ENCODE measurements at regions of chr4 and their contacts with region 1.

Region 1: DNA sequence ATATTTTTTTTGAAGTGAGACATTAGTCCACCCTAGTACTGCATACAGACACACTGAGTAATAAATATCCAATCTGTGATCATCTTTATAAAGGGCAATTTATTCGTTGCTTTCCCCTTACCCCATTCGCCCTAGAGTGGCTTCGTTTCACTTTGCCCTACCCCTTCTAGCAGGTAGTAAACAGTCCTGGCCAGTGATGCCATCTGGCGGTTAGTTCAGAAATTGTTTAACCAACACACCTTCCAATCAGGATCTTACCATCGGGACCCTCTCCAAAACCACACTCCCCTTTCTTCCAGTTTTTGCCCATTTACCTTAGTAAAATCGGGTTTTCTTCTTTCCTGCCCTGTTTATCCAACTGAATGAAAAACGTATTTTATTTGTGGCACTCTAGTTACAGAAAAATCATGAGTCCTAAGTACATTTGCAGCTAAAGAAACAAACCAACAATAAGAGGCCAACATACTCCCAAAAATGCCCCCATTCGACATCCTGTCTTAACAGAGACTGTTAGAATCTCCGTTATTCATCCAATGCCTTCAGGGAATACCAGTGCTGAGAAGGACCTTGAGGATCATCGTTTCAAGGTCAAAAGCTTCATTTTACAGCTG is 2.2 kb downstream of the PPA2 start:
- DNase-seq: peak; percentile 87
- H3K4me3 Mint-ChIP-seq: peak overlapping the region; percentile 98
- H3K27ac Mint-ChIP-seq: peak overlapping the region; percentile 99
- H3K4me1 Mint-ChIP-seq: peaks cover 18% of the 10 kb centered on the region
- H3K27me3 Mint-ChIP-seq: no peaks in the 10 kb centered on the region
- CTCF ChIP-seq: peak; percentile 56

Region 2: DNA sequence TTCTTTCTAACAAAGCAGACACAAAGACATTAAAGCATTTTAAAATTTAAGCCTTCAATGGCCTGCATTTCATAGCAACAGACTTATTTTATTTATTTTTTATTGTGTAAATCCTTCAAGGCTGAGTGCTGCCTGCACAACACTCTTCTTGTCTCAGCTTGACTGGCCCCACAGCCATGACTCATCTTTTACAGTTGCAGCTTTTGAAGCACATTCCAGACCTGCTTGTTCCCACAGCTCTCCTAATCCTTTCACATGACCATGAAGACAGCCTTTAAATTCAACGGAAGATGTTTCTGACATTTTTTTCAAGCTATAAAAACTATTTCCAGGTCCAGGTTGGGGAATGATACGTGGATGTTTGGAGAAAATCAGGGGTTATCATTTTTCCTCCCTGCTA is 1475.0 kb before region 1 on chr4:
- CTCF ChIA-PET with region 1: interaction called, 6 read pairs
- POLR2A ChIA-PET with region 1: interaction called, 15 read pairs
- intact Hi-C with region 1: loop called (anchors 1 kb)
- DNase-seq: peak; percentile 96
- H3K4me3 Mint-ChIP-seq: peak overlapping the region; percentile 47
- H3K27ac Mint-ChIP-seq: peak overlapping the region; percentile 92
- H3K4me1 Mint-ChIP-seq: peaks cover 26% of the 10 kb centered on the region
- H3K27me3 Mint-ChIP-seq: no peaks in the 10 kb centered on the region
- CTCF ChIP-seq: no peak

Region 3: GRCh38 chr4:104860238-104861123 is 611.2 kb before region 1 on chr4:
- CTCF ChIA-PET with region 1: interaction called, 4 read pairs
- POLR2A ChIA-PET with region 1: no interaction called
- intact Hi-C with region 1: loop called (anchors 5 kb)
- DNase-seq: peak; percentile 78
- H3K4me3 Mint-ChIP-seq: no peak overlapping the region
- H3K27ac Mint-ChIP-seq: no peak overlapping the region
- H3K4me1 Mint-ChIP-seq: no peaks in the 10 kb centered on the region
- H3K27me3 Mint-ChIP-seq: no peaks in the 10 kb centered on the region
- CTCF ChIP-seq: peak; percentile 87

Region 4: GRCh38 chr4:105146276-105147015 is 325.2 kb before region 1 on chr4 and contains the start of gene TET2:
- CTCF ChIA-PET with region 1: interaction called, 5 read pairs
- POLR2A ChIA-PET with region 1: interaction called, 14 read pairs
- intact Hi-C with region 1: loop called (anchors 1 kb)
- DNase-seq: peak; percentile 85
- H3K4me3 Mint-ChIP-seq: peak within 1 kb of the TSS; percentile 95
- H3K27ac Mint-ChIP-seq: peak within 1 kb of the TSS; percentile 97
- H3K4me1 Mint-ChIP-seq: peaks cover 20% of the 10 kb centered on the region
- H3K27me3 Mint-ChIP-seq: no peaks in the 10 kb centered on the region
- CTCF ChIP-seq: no peak
- total RNA-seq, gene TET2: 20.5 and 20.9 TPM in 2 replicates

Region 5: GRCh38 chr4:105483840-105484239 is 12.2 kb after region 1 on chr4:
- CTCF ChIA-PET with region 1: interaction called, 9 read pairs
- POLR2A ChIA-PET with region 1: interaction called, 13 read pairs
- intact Hi-C with region 1: no loop called
- DNase-seq: no peak
- H3K4me3 Mint-ChIP-seq: no peak overlapping the region
- H3K27ac Mint-ChIP-seq: no peak overlapping the region
- H3K4me1 Mint-ChIP-seq: no peaks in the 10 kb centered on the region
- H3K27me3 Mint-ChIP-seq: no peaks in the 10 kb centered on the region
- CTCF ChIP-seq: no peak

Region 6: DNA sequence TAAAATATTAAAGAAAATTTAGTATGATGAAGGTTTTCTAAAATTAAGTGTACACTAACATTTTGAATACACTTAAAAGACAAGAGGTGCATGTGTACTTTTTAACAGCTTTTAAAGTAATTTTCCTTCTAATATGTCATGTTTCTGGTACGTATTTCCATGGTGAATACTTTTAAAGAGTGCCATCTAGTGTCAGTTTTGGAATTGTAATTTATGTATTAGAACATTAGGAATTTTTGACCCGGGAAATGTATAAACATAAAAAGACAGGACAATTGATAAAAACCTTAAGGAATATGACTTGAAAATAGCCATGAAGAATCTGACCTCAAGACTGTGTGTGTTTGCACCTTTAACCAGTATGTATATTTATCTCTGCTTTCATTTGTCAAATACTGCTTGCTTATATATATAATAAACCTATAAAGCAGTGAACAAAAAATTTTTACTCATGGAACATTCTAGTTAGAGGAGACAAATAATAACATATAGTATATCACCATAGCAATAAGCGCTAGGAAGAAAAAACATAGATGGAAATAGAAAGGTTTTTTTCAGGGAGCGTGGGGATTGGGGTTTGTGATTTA is 244.1 kb after region 1 on chr4:
- CTCF ChIA-PET with region 1: interaction called, 39 read pairs
- POLR2A ChIA-PET with region 1: interaction called, 34 read pairs
- intact Hi-C with region 1: no loop called
- DNase-seq: peak; percentile 55
- H3K4me3 Mint-ChIP-seq: no peak overlapping the region
- H3K27ac Mint-ChIP-seq: peak overlapping the region; percentile 90
- H3K4me1 Mint-ChIP-seq: peaks cover 12% of the 10 kb centered on the region
- H3K27me3 Mint-ChIP-seq: no peaks in the 10 kb centered on the region
- CTCF ChIP-seq: no peak